ENCODE measurements at regions of chr20 and their contacts with region 1.

Region 1: DNA sequence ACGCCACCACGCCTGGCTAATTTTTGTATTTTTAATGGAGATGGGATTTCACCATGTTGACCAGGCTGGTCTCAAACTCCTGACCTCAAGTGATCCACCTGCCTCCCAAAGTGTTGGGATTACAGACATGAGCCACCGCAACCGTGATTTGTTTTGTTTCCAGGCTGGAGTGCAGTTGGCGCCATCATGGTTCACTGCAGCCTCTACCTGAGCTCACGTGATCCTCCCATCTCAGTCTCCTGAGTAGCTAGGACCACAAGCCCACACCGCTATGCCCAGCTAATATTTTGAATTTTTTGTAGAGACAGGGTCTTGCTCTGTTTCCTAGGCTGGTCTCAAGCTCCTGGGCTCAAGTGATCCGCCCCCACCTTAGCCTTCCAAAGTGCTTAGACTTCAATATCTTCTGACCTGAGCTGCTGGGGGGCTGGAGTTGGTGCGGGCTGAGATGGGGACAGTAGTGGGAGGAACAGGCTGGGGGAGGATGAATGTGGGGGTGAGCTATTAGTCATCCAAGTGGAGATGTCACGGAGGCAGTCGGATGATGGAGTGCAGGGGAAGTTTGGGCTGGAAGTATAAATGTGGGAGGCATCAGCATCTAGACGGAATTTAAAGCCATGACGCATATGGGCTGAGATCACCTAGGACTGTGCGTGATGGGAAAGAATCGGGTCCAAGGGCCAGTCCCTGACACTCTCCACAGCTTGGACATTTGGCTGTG is 23.1 kb upstream of the ZMYND8 start:
- DNase-seq: no peak
- ATAC-seq: no peak
- H3K4me3 ChIP-seq: no peak overlapping the region
- H3K27ac ChIP-seq: no peak overlapping the region
- H3K4me1 ChIP-seq: peaks cover 5% of the 10 kb centered on the region
- H3K27me3 ChIP-seq: no peaks in the 10 kb centered on the region
- CTCF ChIP-seq: no peak
- EP300 ChIP-seq: no peak
- POLR2A ChIP-seq: no peak
- RAD21 ChIP-seq: no peak

Region 2: GRCh38 chr20:46757754-46758678 is 621.6 kb before region 1 on chr20:
- CTCF ChIA-PET with region 1: interaction called, 18 read pairs
- POLR2A ChIA-PET with region 1: no interaction called
- RAD21 ChIA-PET with region 1: interaction called, 15 read pairs
- SMC1A ChIA-PET with region 1: interaction called, 9 read pairs
- in situ Hi-C with region 1: loop called (anchors 5 kb)
- intact Hi-C with region 1: loop called (anchors 2 kb)
- DNase-seq: peak; percentile 30
- ATAC-seq: peak; percentile 73
- H3K4me3 ChIP-seq: no peak overlapping the region
- H3K27ac ChIP-seq: no peak overlapping the region
- H3K4me1 ChIP-seq: no peaks in the 10 kb centered on the region
- H3K27me3 ChIP-seq: no peaks in the 10 kb centered on the region; a peak in 1 of 4 replicates
- CTCF ChIP-seq: peak; percentile 91 to 94 (median 91)
- EP300 ChIP-seq: no peak
- POLR2A ChIP-seq: no peak
- RAD21 ChIP-seq: peak; percentile 68

Region 3: GRCh38 chr20:47220161-47220582 is 159.4 kb before region 1 on chr20:
- CTCF ChIA-PET with region 1: interaction called, 38 read pairs
- POLR2A ChIA-PET with region 1: no interaction called
- RAD21 ChIA-PET with region 1: interaction called, 9 read pairs
- SMC1A ChIA-PET with region 1: interaction called, 10 read pairs
- in situ Hi-C with region 1: no loop called
- intact Hi-C with region 1: loop called (anchors 1 kb)
- DNase-seq: no peak
- ATAC-seq: peak; percentile 87
- H3K4me3 ChIP-seq: no peak overlapping the region
- H3K27ac ChIP-seq: no peak overlapping the region
- H3K4me1 ChIP-seq: no peaks in the 10 kb centered on the region; the same call in 1 of the 2 replicates
- H3K27me3 ChIP-seq: no peaks in the 10 kb centered on the region
- CTCF ChIP-seq: peak; percentile 35 to 74 (median 64); a peak in 5 of 6 replicates
- EP300 ChIP-seq: no peak
- POLR2A ChIP-seq: no peak
- RAD21 ChIP-seq: peak; percentile 57

Region 4: GRCh38 chr20:47272893-47273590 is 106.5 kb before region 1 on chr20:
- CTCF ChIA-PET with region 1: interaction called, 344 read pairs
- POLR2A ChIA-PET with region 1: interaction called, 10 read pairs
- RAD21 ChIA-PET with region 1: interaction called, 247 read pairs
- SMC1A ChIA-PET with region 1: interaction called, 266 read pairs
- in situ Hi-C with region 1: loop called (anchors 10 kb)
- intact Hi-C with region 1: loop called (anchors 1 kb)
- DNase-seq: peak; percentile 46
- ATAC-seq: peak; percentile 59
- H3K4me3 ChIP-seq: no peak overlapping the region
- H3K27ac ChIP-seq: 0 out of 2 replicates have a peak overlapping the region, but pooled peaks have one; percentile 15
- H3K4me1 ChIP-seq: peaks cover 28% of the 10 kb centered on the region
- H3K27me3 ChIP-seq: no peaks in the 10 kb centered on the region
- CTCF ChIP-seq: peak; percentile 77 to 94 (median 81); a peak in 5 of 6 replicates
- EP300 ChIP-seq: no peak
- POLR2A ChIP-seq: no peak
- RAD21 ChIP-seq: peak; percentile 97

Region 5: DNA sequence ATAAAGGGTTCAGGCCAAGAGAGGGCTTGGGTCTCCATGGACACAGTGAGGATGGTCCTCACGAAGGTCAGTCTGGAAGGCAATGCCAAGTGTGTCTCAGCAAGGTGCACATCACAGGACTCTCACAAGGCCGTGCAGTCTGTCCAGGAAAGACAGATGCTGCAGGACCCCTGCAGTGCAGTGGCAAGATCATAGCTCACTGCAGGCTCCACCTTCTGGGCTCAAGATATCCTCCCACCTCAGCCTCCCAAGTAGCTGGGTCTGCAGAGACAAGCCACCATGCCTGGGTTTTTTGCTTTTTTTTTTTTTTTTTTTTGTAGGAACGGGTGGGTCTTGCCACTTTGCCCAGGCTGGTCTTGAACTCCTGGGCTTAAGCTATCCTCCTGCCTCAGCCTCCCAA is 49.5 kb before region 1 on chr20:
- CTCF ChIA-PET with region 1: interaction called, 11 read pairs
- POLR2A ChIA-PET with region 1: interaction called, 3 read pairs
- RAD21 ChIA-PET with region 1: interaction called, 3 read pairs
- SMC1A ChIA-PET with region 1: interaction called, 17 read pairs
- in situ Hi-C with region 1: no loop called
- intact Hi-C with region 1: no loop called
- DNase-seq: no peak
- ATAC-seq: no peak
- H3K4me3 ChIP-seq: no peak overlapping the region
- H3K27ac ChIP-seq: no peak overlapping the region
- H3K4me1 ChIP-seq: no peaks in the 10 kb centered on the region
- H3K27me3 ChIP-seq: no peaks in the 10 kb centered on the region
- CTCF ChIP-seq: no peak
- EP300 ChIP-seq: no peak
- POLR2A ChIP-seq: no peak
- RAD21 ChIP-seq: no peak

Region 6: DNA sequence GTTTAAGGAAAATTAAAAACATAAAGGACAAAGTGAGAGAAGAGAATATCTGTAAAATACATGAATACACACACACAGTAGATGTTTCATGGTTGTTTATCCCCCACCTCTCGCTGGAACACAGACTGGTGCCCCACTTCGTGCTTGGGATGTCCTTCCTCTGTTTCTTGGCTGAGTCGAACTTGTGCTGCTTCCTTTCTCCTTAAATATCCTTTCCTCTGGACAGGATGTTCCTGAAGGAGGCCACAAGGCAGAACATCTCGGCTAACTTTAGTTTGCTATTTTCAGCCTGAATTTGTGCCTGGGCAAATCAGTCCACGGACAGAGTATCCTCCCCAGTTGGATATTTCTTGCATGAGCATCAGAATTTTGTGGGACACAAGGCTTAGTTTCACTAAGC is 31.6 kb after region 1 on chr20:
- CTCF ChIA-PET with region 1: interaction called, 33 read pairs
- POLR2A ChIA-PET with region 1: interaction called, 3 read pairs
- RAD21 ChIA-PET with region 1: interaction called, 15 read pairs
- SMC1A ChIA-PET with region 1: interaction called, 24 read pairs
- in situ Hi-C with region 1: no loop called
- intact Hi-C with region 1: no loop called
- DNase-seq: no peak
- ATAC-seq: no peak
- H3K4me3 ChIP-seq: peak overlapping the region; percentile 64
- H3K27ac ChIP-seq: peak overlapping the region; percentile 91
- H3K4me1 ChIP-seq: peaks cover 55% of the 10 kb centered on the region
- H3K27me3 ChIP-seq: no peaks in the 10 kb centered on the region
- CTCF ChIP-seq: no peak
- EP300 ChIP-seq: no peak
- POLR2A ChIP-seq: no peak
- RAD21 ChIP-seq: no peak

Region 7: DNA sequence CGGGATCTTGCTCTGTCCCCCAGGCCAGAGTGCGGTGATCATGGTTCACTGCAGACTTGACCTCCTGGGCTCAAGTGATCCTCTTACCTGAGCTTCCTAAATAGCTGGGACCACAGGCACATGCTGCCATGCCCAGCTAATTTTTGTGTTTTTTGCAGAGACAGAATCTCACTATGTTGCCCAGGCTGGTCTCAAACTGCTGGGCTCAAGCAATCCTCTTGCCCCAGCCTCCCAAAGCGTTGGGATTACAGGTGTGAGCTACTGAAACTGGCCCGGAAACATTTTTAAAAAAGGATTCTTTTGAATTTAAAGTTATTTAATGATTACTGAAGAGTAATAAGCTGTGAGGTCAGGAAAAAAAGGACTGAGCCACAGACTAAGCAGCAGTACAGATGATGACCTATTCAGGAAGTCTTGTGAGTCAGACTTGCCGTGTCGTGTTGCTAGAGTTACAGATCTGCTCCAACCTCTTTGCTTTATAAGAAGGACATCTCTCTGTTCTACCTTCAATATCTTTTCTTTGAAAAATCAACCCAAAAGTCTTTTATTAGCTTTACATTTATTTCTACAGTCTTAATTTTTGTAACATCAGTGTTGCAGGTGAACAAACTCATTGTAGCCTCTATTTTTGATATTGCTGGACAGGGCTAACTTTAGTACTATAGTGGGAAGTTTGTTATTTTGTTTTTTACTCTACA is 230.8 kb after region 1 on chr20:
- CTCF ChIA-PET with region 1: interaction called, 17 read pairs
- POLR2A ChIA-PET with region 1: interaction called, 3 read pairs
- RAD21 ChIA-PET with region 1: interaction called, 8 read pairs
- SMC1A ChIA-PET with region 1: interaction called, 15 read pairs
- in situ Hi-C with region 1: no loop called
- intact Hi-C with region 1: no loop called
- DNase-seq: peak; percentile 33
- ATAC-seq: peak; percentile 94
- H3K4me3 ChIP-seq: no peak overlapping the region
- H3K27ac ChIP-seq: peak overlapping the region; percentile 18; the same call in 1 of the 2 replicates
- H3K4me1 ChIP-seq: peaks cover 6% of the 10 kb centered on the region
- H3K27me3 ChIP-seq: no peaks in the 10 kb centered on the region
- CTCF ChIP-seq: no peak
- EP300 ChIP-seq: no peak
- POLR2A ChIP-seq: no peak
- RAD21 ChIP-seq: no peak

Measured in GM12878 (cell line).